ENCODE measurements at regions of chr2 and their contacts with region 1.

Region 1: GRCh38 chr2:170973492-170974303 is 44.6 kb downstream of the GORASP2 start:
- DNase-seq: peak; percentile 90
- H3K4me3 ChIP-seq: peak overlapping the region; percentile 77 to 87
- H3K27ac ChIP-seq: peak overlapping the region; percentile 80 to 90
- H3K4me1 ChIP-seq: peaks cover 10% of the 10 kb centered on the region
- H3K27me3 ChIP-seq: no peaks in the 10 kb centered on the region
- CTCF ChIP-seq: peak; percentile 91 to 98 (median 97)
- POLR2A ChIP-seq: no peak

Region 2: GRCh38 chr2:171159372-171160118 is 185.8 kb after region 1 on chr2:
- intact Hi-C with region 1: loop called (anchors 10 kb)
- DNase-seq: peak; percentile 73
- H3K4me3 ChIP-seq: peak overlapping the region; percentile 78 to 92
- H3K27ac ChIP-seq: peak overlapping the region; percentile 95 to 99
- H3K4me1 ChIP-seq: peaks cover 20% of the 10 kb centered on the region
- H3K27me3 ChIP-seq: no peaks in the 10 kb centered on the region
- CTCF ChIP-seq: peak; percentile 46 to 53 (median 50)
- POLR2A ChIP-seq: no peak

Region 3: DNA sequence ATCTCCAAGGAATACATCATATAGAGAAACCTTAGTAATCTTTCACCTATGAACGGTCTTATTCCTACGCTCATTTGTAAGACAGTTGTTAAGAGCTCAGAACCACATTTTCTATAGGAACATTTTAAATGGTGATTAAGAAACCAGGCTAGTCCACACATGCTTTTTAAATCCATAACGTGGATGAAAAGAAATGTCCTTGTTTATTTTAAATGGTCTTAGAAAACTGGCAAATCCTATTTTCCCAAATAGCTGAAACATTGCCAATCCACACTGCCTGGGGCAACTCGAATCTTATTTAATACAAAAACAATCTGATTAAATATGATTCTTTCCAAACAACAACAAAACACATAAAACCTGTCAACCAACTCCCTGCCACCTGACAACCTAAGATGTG is 436.4 kb after region 1 on chr2:
- intact Hi-C with region 1: loop called (anchors 5 kb)
- DNase-seq: no peak
- H3K4me3 ChIP-seq: no peak overlapping the region
- H3K27ac ChIP-seq: no peak overlapping the region
- H3K4me1 ChIP-seq: no peaks in the 10 kb centered on the region
- H3K27me3 ChIP-seq: no peaks in the 10 kb centered on the region
- CTCF ChIP-seq: no peak
- POLR2A ChIP-seq: no peak